Endothelial cell of umbilical vein (primary cell): ENCODE measurements at regions of chr18 and their contacts with region 1.

Region 1: DNA sequence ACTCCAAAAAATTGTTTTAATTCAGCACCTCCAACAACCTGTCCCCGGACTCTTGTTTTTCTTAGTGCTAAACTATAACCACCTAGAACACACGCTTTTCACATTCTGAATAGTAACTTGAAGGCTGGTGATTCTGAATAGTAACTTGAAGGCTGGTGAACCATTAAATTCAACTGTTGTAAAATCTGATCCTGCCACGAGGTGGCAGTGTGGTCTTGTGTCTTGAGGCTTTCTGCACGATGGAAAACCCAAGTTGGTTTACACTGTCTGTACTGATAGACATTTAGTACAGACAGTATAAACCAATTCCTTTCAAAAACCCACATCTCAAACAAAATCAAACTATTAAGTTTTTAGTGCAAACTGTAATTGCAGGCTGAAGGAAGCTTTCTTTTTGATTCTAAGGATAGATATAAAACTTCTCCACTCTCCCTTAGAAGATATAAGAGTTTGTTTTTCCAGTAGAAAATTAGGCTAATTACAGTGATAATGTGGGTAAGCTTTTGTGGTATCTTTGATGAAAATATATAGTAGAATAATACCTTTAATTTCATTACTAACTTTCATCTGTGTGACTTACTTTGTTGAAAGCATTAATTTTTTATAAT is 57.6 kb downstream of the VAPA start:
- DNase-seq: peak; percentile 87
- H3K4me3 ChIP-seq: no peak overlapping the region
- H3K27ac ChIP-seq: no peak overlapping the region
- H3K4me1 ChIP-seq: peaks cover 9% of the 10 kb centered on the region
- H3K27me3 ChIP-seq: peaks cover 7 to 8% of the 10 kb centered on the region in 2 experiments
- CTCF ChIP-seq: peak; percentile 51 to 54
- POLR2A ChIP-seq: no peak

Region 2: GRCh38 chr18:10032331-10033015 is 61.1 kb after region 1 on chr18:
- CTCF ChIA-PET with region 1: interaction called, 3 read pairs
- POLR2A ChIA-PET with region 1: interaction called, 10 read pairs
- dilution Hi-C with region 1: no loop called
- intact Hi-C with region 1: loop called (anchors 5 kb)
- DNase-seq: peak; percentile 27
- H3K4me3 ChIP-seq: no peak overlapping the region
- H3K27ac ChIP-seq: no peak overlapping the region
- H3K4me1 ChIP-seq: peaks cover 3% of the 10 kb centered on the region
- H3K27me3 ChIP-seq: no peaks in the 10 kb centered on the region
- CTCF ChIP-seq: peak; percentile 56 to 66
- POLR2A ChIP-seq: no peak

Region 3: GRCh38 chr18:10320791-10321190 is 349.4 kb after region 1 on chr18:
- CTCF ChIA-PET with region 1: interaction called, 13 read pairs
- POLR2A ChIA-PET with region 1: no interaction called
- dilution Hi-C with region 1: no loop called
- intact Hi-C with region 1: loop called (anchors 1 kb)
- DNase-seq: no peak
- H3K4me3 ChIP-seq: no peak overlapping the region
- H3K27ac ChIP-seq: no peak overlapping the region
- H3K4me1 ChIP-seq: no peaks in the 10 kb centered on the region
- H3K27me3 ChIP-seq: peaks cover 0 to 7% of the 10 kb centered on the region in 2 experiments
- CTCF ChIP-seq: no peak
- POLR2A ChIP-seq: no peak

Region 4: GRCh38 chr18:10560450-10561045 is 589.1 kb after region 1 on chr18:
- CTCF ChIA-PET with region 1: interaction called, 13 read pairs
- POLR2A ChIA-PET with region 1: no interaction called
- dilution Hi-C with region 1: no loop called
- intact Hi-C with region 1: no loop called
- DNase-seq: peak; percentile 69
- H3K4me3 ChIP-seq: no peak overlapping the region
- H3K27ac ChIP-seq: no peak overlapping the region
- H3K4me1 ChIP-seq: peaks cover 2% of the 10 kb centered on the region
- H3K27me3 ChIP-seq: no peaks in the 10 kb centered on the region
- CTCF ChIP-seq: peak; percentile 70 to 79
- POLR2A ChIP-seq: no peak

Region 5: GRCh38 chr18:10928772-10929373 is 957.5 kb after region 1 on chr18:
- CTCF ChIA-PET with region 1: no interaction called
- POLR2A ChIA-PET with region 1: no interaction called
- dilution Hi-C with region 1: no loop called
- intact Hi-C with region 1: loop called (anchors 5 kb)
- DNase-seq: no peak
- H3K4me3 ChIP-seq: no peak overlapping the region
- H3K27ac ChIP-seq: peak overlapping the region; percentile 93
- H3K4me1 ChIP-seq: peaks cover 40% of the 10 kb centered on the region
- H3K27me3 ChIP-seq: no peaks in the 10 kb centered on the region
- CTCF ChIP-seq: no peak
- POLR2A ChIP-seq: no peak

Region 6: GRCh38 chr18:11310476-11311086 is 1339.2 kb after region 1 on chr18:
- CTCF ChIA-PET with region 1: no interaction called
- POLR2A ChIA-PET with region 1: no interaction called
- dilution Hi-C with region 1: no loop called
- intact Hi-C with region 1: loop called (anchors 5 kb)
- DNase-seq: peak; percentile 16
- H3K4me3 ChIP-seq: no peak overlapping the region
- H3K27ac ChIP-seq: no peak overlapping the region
- H3K4me1 ChIP-seq: no peaks in the 10 kb centered on the region
- H3K27me3 ChIP-seq: no peaks in the 10 kb centered on the region
- CTCF ChIP-seq: peak; percentile 63 to 73
- POLR2A ChIP-seq: no peak